GM18951 (cell line): ENCODE measurements at regions of chr10 and their contacts with region 1.

Region 1: GRCh38 chr10:12241810-12242529 is 46.0 kb downstream of the CDC123 start:
- POLR2A ChIP-seq: no peak

Region 2: DNA sequence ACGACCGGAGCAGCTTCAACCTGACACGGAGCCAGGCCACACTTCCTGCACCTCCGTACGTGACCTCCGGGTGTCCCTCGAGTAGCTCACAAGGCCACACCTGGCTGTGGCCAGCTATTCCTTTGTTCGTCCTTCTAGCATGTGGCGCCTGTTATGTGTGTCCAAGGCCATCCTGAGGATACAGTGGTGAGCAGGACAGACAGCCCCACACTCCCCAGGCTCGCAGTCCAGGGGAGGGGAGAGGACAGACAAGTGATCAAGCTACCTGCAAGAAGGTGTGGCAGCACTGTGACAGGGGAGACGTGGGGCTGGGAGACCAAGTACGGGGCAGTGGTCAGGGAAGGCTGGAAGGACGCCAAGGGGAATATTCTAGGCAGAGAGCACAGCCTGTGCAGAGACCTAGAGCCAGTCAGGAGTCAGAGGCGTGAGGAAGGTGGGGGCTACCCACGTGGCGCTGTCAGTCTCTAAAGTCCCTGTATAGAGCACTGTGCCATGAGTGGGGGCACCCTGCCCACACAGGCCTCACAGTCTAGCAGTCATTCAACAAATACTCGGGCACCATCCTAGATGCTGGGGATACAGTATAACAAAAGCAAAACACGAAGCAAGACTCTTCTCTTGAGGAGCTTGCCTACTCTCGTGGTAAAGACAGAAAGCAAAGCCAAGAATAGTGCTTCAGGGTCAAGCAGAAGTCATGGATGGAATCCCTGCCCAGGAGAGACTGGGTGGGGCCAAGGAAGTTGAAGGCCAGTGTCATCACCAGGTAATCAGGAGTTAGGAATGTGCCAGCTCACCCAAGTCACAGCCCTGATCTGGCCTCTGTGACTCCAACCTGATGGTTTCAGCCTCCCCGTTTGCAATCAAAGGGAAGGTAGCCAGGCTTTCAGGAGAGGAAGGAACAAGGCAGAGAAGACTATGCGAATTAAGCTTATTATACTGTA is 360.2 kb before region 1 on chr10:
- in situ Hi-C with region 1: no loop called
- POLR2A ChIP-seq: no peak

Region 3: DNA sequence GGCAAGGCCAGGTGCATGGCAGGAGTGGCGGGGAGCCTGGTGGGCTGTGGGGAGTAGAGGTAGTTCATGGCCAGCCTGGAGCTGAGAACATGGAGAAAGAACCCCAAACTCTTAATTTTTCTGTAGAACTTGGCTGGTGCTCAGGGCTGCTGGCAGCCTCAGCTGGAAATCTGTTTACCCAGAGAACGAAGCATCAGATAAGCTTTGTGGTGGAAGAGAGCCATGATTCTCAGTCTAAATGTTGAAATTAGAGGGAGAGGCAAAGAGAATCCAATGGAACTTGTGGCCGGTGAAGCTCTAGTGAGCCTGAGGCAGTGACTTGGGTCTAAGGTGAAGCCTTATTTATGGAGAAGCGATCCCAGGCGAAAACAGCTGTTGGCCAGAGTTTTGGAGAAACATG is 633.1 kb after region 1 on chr10:
- in situ Hi-C with region 1: loop called (anchors 25 kb)
- POLR2A ChIP-seq: no peak

Region 4: DNA sequence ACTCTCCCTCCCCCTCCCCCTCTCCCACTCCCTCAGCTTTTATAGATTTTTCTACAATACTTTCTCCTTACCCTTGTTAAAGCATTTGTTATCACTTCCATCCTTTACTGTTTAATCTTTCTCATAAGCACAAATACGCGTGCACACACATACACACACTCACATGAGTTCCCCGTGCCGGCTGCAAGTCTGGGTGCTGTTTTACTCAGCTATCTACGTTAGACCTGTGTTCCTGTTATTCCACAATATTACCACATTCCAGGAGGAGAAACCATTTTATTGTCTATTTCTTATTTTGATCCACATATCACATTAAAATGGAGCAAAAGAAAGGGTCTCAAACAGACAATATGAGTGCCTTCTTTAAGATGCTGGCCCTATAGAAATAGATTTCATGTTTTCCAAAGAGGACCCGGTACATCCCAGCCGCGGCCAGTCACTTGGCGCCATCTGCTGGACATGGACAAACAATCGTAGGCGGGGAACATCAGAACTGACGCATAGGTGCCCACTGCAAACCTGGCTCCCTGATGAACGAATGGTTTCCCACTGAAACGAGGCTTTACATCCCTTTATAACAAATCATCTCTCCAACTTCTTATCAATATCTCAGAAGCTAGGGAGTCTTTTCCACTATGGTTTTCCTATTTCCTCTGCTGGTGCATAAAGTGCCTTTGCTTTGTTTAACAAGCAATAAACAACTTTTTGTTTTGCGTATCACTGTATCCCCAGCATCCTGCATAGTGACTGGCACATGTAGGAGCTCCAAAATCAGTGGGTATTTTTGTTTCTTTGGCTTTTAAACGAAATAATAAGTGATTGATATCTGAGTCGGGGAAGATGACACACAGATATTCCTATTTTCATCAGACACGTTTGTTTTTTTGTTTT is 832.8 kb after region 1 on chr10:
- in situ Hi-C with region 1: loop called (anchors 25 kb)
- POLR2A ChIP-seq: no peak